Gastrocnemius medialis (tissue), 4 donors: ENCODE measurements at regions of chr3 and their contacts with region 1.

Region 1: GRCh38 chr3:112519424-112520001 is 20.2 kb upstream of the BTLA start:
- DNase-seq: no peak
- ATAC-seq: no peak
- H3K4me3 ChIP-seq: no peak overlapping the region
- H3K27ac ChIP-seq: no peak overlapping the region
- H3K4me1 ChIP-seq: no peaks in the 10 kb centered on the region
- H3K27me3 ChIP-seq: no peaks in the 10 kb centered on the region
- CTCF ChIP-seq: peak in 4 of 5 experiments; percentile 18 to 48 (median 44)
- POLR2A ChIP-seq: no peak

Region 2: DNA sequence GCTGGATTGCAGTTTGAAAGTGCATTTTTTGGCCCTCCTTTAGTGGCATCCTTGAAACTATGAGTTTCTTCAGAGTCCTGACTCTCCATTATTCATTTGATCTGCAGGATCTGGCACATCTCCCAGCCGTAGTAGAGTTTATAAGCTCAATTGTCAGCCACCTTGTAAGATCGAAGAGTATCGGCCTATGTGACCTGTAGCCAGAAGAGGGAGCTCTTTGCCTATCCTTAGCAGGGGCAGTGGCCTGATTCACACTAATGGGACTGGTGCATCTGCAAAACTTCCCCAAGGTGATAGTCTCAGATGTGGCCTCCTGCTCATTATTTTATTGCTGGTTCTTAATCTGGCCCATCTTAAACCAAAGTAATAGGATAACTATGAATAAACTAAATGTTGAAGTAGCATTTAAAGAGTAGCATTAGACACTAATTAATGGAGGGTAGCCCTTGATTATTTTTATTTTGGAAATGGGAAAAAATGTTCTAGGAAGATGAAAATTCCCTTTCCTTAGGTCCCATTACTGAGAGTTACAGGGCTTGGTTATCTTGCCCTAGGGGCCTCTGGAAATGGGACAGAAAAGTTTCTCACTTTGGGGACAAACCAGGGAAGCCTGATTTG is 407.6 kb before region 1 on chr3:
- in situ Hi-C with region 1: loop called in 1 of 4 experiments (anchors 25 kb)
- intact Hi-C with region 1: no loop called
- DNase-seq: no peak
- ATAC-seq: no peak
- H3K4me3 ChIP-seq: no peak overlapping the region
- H3K27ac ChIP-seq: no peak overlapping the region
- H3K4me1 ChIP-seq: no peaks in the 10 kb centered on the region
- H3K27me3 ChIP-seq: no peaks in the 10 kb centered on the region
- CTCF ChIP-seq: peak in 4 of 5 experiments; percentile 9 to 52 (median 33)
- POLR2A ChIP-seq: no peak

Region 3: GRCh38 chr3:112136959-112137693 is 382.4 kb before region 1 on chr3:
- in situ Hi-C with region 1: loop called in 1 of 4 experiments (anchors 25 kb)
- intact Hi-C with region 1: no loop called
- DNase-seq: no peak
- ATAC-seq: no peak
- H3K4me3 ChIP-seq: no peak overlapping the region
- H3K27ac ChIP-seq: no peak overlapping the region
- H3K4me1 ChIP-seq: no peaks in the 10 kb centered on the region
- H3K27me3 ChIP-seq: no peaks in the 10 kb centered on the region
- CTCF ChIP-seq: peak in 1 of 5 experiments; percentile 14
- POLR2A ChIP-seq: no peak

Region 4: DNA sequence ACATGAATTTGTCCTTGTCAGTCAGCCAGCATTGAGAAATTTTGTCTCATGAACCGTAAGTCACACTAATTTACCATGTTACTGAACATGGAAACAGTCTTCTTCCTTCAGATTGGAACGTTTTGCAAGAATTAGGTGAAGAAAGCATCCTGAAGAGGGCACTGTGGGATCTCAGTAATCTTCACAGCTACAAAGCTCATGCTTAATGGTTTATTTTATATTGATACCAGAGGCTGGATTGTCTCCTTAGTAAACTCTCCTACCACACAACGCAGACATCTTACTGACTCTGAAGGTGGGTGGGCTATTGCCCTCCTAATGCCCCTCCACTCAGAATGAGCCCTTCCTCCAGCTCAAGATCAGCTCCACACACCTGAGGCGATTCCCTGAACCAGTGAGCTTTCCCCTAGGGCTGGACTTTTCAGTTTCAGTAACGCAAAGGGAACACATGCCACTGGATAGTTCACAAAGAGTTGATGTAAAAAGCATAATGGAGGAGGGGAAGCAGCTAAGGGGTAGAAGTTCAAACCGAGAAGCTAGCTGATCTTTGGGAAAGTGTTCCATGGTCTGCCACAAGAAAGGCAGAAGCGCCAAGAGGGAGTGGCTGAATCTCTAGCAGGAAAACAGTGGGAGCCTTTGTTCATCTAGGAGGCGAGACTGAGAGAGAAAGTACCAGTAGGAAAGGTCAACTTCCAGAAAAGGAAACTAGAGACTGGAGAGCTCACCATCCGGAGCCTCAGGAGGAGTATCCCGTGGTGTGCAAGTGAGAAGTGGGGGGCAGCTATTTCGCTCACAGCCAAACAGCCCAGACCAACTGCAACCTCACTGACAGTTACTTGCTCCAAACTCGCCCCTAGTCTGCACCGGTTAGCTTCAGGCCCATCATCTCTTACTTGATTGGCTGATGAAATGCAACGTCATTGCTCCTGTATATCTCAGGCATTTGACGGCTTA is 225.9 kb before region 1 on chr3 and contains the start of gene SLC9C1:
- in situ Hi-C with region 1: loop called in 1 of 4 experiments (anchors 25 kb)
- intact Hi-C with region 1: no loop called
- DNase-seq: no peak
- ATAC-seq: peak; percentile 72 to 79
- H3K4me3 ChIP-seq: peak within 1 kb of the TSS; percentile 35 to 49 (median 42)
- H3K27ac ChIP-seq: peak within 1 kb of the TSS in 3 of 4 donors; percentile 31 to 66 (median 31)
- H3K4me1 ChIP-seq: peaks cover 0 to 3% of the 10 kb centered on the region in 2 donors
- H3K27me3 ChIP-seq: no peaks in the 10 kb centered on the region
- CTCF ChIP-seq: peak in 3 of 5 experiments; percentile 27 to 46 (median 42)
- POLR2A ChIP-seq: no peak
- total RNA-seq, gene SLC9C1: not detected

Region 5: DNA sequence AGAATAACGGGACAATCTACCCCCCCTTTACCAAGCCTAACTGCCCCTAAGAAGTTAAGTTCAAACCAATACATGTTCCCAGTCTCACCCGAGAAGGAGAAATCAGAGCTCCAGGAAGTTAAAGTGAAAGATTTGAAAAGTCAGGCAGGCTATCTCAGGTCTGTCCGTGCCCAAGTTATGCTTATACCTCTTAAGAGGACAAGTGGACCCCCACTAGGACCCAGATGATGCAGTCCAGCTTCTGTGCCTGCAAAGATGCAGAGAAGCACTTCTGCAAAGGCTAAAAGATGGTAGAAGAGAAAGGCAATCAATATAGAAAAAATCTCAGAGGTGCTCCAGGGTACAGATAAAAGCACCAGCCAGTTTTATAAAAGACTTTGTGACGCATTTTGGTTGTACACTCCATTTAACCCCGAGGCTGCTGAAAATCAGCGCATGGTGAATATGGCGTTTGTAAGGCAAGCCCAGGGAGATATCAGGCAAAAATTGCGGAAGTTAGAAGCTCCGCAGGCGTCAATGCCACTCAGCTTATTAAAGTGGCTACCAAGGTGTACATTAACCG is 215.7 kb before region 1 on chr3:
- in situ Hi-C with region 1: loop called in 2 of 4 experiments (anchors 25 kb)
- intact Hi-C with region 1: no loop called
- DNase-seq: no peak
- ATAC-seq: peak in 1 of 2 donors; percentile 49
- H3K4me3 ChIP-seq: peak overlapping the region; percentile 41 to 54 (median 46)
- H3K27ac ChIP-seq: no peak overlapping the region
- H3K4me1 ChIP-seq: peaks cover 0 to 7% of the 10 kb centered on the region in 2 donors
- H3K27me3 ChIP-seq: no peaks in the 10 kb centered on the region
- CTCF ChIP-seq: no peak
- POLR2A ChIP-seq: no peak

Region 6: GRCh38 chr3:112327371-112327951 is 192.1 kb before region 1 on chr3:
- in situ Hi-C with region 1: loop called in 3 of 4 experiments (anchors 10 to 25 kb)
- intact Hi-C with region 1: loop called (anchors 10 kb)
- DNase-seq: no peak
- ATAC-seq: no peak
- H3K4me3 ChIP-seq: no peak overlapping the region
- H3K27ac ChIP-seq: no peak overlapping the region
- H3K4me1 ChIP-seq: no peaks in the 10 kb centered on the region
- H3K27me3 ChIP-seq: peaks cover 0 to 4% (median 0%) of the 10 kb centered on the region in 3 donors
- CTCF ChIP-seq: peak in 4 of 5 experiments; percentile 12 to 37 (median 26)
- POLR2A ChIP-seq: no peak